ENCODE measurements at regions of chr5 and their contacts with region 1.

Region 1: DNA sequence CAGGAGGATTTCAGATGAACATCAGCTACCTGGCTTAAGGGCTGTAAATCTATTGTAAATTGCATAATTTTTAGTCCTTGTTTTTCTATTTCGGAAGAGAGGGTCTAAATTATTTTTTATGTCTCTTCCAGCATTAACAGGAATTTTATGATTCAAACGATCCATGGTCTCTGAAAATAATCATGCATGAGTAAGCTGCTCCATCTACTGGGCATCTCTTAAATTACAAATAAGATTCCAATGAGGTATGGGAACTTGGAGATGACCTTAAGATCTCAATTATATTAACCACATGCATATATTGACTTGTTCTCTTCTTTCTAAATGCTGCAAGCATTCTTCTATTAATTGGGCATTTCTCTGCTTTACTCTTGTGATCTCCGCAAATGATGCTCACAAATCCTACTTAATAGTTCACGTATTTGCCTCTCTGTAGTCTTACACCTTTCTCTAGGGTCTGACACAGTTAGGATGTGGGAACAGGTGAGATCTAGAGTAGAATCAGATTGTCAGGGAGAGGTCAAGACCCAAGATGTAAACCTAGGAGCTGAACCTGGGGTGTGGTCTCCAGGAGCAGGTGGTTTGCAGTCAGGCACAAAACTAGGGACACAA is 86.9 kb downstream of the NUDT12 start:
- DNase-seq: no peak
- H3K4me3 ChIP-seq: no peak overlapping the region
- H3K27ac ChIP-seq: no peak overlapping the region
- H3K4me1 ChIP-seq: no peaks in the 10 kb centered on the region
- H3K27me3 ChIP-seq: no peaks in the 10 kb centered on the region
- CTCF ChIP-seq: peak; percentile 15 to 89 (median 60)
- POLR2A ChIP-seq: no peak

Region 2: GRCh38 chr5:103232393-103232999 is 243.2 kb before region 1 on chr5:
- intact Hi-C with region 1: loop called (anchors 5 kb)
- DNase-seq: peak in 1 of 2 donors; percentile 10
- H3K4me3 ChIP-seq: no peak overlapping the region
- H3K27ac ChIP-seq: no peak overlapping the region
- H3K4me1 ChIP-seq: peaks cover 0 to 10% of the 10 kb centered on the region in 2 donors
- H3K27me3 ChIP-seq: no peaks in the 10 kb centered on the region
- CTCF ChIP-seq: peak; percentile 36 to 92 (median 84)
- POLR2A ChIP-seq: no peak

Region 3: DNA sequence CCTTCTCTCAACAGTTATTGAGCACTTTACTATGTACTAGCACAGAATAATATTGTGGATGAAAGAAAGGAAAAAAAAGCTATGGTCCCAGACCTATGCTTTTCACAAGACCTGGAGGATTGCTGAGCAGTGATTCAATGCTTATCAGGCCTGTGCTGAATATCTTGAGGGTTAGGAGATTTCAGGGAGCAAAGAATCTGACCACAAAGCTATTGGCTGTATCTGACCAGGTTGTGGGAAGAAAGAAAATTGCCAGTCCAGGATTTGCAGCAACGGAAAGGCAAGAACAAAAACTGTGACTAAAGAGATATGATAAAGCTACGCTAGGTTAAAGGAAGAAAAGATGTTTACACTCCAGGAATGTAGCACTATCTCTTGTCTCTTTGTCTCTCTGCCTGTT is 232.1 kb before region 1 on chr5:
- intact Hi-C with region 1: no loop called
- DNase-seq: no peak
- H3K4me3 ChIP-seq: no peak overlapping the region
- H3K27ac ChIP-seq: no peak overlapping the region
- H3K4me1 ChIP-seq: no peaks in the 10 kb centered on the region
- H3K27me3 ChIP-seq: no peaks in the 10 kb centered on the region
- CTCF ChIP-seq: no peak
- POLR2A ChIP-seq: no peak

Region 4: GRCh38 chr5:103290846-103291245 is 184.9 kb before region 1 on chr5:
- intact Hi-C with region 1: no loop called
- DNase-seq: no peak
- H3K4me3 ChIP-seq: no peak overlapping the region
- H3K27ac ChIP-seq: no peak overlapping the region
- H3K4me1 ChIP-seq: no peaks in the 10 kb centered on the region
- H3K27me3 ChIP-seq: no peaks in the 10 kb centered on the region
- CTCF ChIP-seq: no peak
- POLR2A ChIP-seq: no peak

Region 5: DNA sequence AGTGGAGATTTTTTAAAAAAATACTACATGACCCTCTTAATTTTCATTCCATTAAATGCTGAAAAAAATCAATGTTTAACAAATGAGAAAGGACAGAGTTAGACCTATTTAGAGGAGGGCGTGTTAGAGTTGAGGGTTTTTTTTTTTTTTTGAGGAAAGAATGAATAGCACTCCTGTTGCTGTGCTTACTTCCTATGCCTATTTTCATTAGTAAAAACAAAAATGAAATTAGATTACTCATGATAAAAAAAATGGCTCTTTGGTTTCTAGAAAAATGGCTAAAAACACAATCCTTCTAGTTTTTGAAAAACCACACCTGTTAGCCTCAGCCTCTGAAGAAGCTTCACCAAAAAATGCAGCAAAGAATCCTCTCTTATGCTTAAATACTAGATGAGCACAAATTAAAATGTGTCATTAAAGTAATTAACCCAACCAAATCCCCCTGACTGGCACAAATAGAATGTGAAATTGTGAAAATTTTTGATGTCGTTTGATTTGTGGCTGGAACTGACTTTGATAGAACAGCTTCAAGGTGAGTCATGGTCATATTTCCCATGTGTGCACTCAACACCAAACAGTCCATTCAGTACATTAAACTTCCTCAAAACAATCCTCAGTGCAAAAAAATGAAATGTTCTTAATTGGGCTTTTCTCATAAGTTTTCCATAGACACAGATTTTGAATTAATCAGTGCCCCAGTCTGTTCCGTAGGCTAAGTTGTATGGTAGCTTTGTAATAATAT is 119.2 kb before region 1 on chr5:
- intact Hi-C with region 1: no loop called
- DNase-seq: no peak
- H3K4me3 ChIP-seq: no peak overlapping the region
- H3K27ac ChIP-seq: no peak overlapping the region
- H3K4me1 ChIP-seq: no peaks in the 10 kb centered on the region
- H3K27me3 ChIP-seq: no peaks in the 10 kb centered on the region
- CTCF ChIP-seq: no peak
- POLR2A ChIP-seq: no peak

Region 6: GRCh38 chr5:103582364-103582763 is 106.6 kb after region 1 on chr5:
- intact Hi-C with region 1: no loop called
- DNase-seq: peak; percentile 5 to 10
- H3K4me3 ChIP-seq: no peak overlapping the region
- H3K27ac ChIP-seq: no peak overlapping the region
- H3K4me1 ChIP-seq: no peaks in the 10 kb centered on the region
- H3K27me3 ChIP-seq: no peaks in the 10 kb centered on the region
- CTCF ChIP-seq: peak in 5 of 6 experiments; percentile 16 to 52 (median 47)
- POLR2A ChIP-seq: no peak